Vagina (tissue), 2 donors: ENCODE measurements at regions of chr7 and their contacts with region 1.

Region 1: DNA sequence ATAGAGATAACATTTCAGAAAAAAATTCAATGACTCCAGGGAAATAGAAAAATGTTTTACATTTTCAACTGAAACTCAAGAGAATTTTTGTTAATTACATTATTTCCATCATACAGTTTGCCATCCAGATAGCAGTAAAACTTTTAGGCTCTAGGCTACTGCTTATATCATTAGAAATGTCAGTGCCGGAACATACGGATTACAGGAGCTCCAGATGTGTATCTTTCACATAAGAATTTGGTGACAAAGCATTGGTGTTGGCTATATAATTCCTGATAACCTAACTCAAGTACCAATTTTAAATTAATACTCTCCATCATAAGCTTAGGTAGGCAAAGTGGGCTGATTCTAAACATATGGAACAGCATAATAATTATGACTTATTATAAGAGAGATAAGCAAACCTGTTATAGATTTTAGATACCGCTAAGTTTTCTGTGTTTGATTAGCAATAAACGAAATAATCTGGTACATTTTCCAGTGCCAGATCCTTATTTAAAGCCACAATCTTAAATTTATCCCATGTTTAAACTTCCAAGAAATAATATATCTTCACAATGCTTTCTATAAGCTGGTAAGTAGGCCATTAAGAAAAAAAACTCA is 637.9 kb downstream of the NXPH1 start:
- DNase-seq: no peak
- H3K4me3 ChIP-seq: no peak overlapping the region
- H3K27ac ChIP-seq: no peak overlapping the region
- H3K4me1 ChIP-seq: no peaks in the 10 kb centered on the region
- H3K27me3 ChIP-seq: no peaks in the 10 kb centered on the region
- CTCF ChIP-seq: no peak
- POLR2A ChIP-seq: no peak

Region 2: DNA sequence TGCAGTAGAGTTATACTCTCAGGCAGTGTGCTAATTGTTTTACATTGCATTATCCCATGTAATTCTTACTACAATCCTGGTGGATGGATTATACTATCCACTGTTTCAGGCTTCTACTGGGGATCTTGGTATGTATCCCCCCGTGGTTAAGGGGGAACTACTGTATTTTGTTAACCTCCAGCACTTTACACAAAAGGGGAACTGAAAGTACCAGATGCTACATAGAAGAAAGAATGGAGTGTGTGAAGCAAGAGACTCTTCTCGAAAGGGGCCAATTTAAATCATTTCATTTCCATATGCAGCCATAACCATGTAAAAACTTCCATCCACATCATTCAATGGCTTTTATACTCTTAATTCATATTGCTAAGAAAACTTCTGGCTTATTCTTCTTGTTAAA is 1819.5 kb before region 1 on chr7:
- intact Hi-C with region 1: no loop called
- DNase-seq: no peak
- H3K4me3 ChIP-seq: no peak overlapping the region
- H3K27ac ChIP-seq: no peak overlapping the region
- H3K4me1 ChIP-seq: no peaks in the 10 kb centered on the region
- H3K27me3 ChIP-seq: no peaks in the 10 kb centered on the region
- CTCF ChIP-seq: no peak
- POLR2A ChIP-seq: no peak

Region 3: GRCh38 chr7:9029671-9030530 is 41.4 kb before region 1 on chr7:
- intact Hi-C with region 1: loop called (anchors 1 kb)
- DNase-seq: no peak
- H3K4me3 ChIP-seq: no peak overlapping the region
- H3K27ac ChIP-seq: no peak overlapping the region
- H3K4me1 ChIP-seq: no peaks in the 10 kb centered on the region
- H3K27me3 ChIP-seq: no peaks in the 10 kb centered on the region
- CTCF ChIP-seq: no peak
- POLR2A ChIP-seq: no peak

Region 4: DNA sequence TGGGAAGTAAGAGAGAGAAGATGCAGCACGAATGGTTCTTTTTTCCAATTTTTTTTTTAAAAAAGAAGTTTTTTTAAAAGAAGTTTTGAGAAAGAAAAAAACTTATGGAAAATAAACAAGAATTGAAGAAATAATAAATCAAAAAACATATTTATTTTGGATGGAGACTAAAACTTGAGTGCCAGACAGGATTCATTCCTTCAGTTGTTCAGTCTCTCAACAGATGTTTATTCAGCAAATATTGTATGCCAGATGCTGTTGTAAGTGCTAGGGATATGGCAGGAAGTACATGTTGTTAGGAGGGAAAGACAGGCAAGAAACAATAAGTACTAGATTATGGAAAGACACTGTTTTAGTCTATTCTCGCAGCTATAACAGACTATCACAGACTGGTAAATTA is 1151.7 kb after region 1 on chr7:
- intact Hi-C with region 1: loop called (anchors 5 kb)
- DNase-seq: no peak
- H3K4me3 ChIP-seq: no peak overlapping the region
- H3K27ac ChIP-seq: no peak overlapping the region
- H3K4me1 ChIP-seq: no peaks in the 10 kb centered on the region
- H3K27me3 ChIP-seq: no peaks in the 10 kb centered on the region
- CTCF ChIP-seq: no peak
- POLR2A ChIP-seq: no peak